ENCODE measurements at regions of chr17 and their contacts with region 1.

Region 1: DNA sequence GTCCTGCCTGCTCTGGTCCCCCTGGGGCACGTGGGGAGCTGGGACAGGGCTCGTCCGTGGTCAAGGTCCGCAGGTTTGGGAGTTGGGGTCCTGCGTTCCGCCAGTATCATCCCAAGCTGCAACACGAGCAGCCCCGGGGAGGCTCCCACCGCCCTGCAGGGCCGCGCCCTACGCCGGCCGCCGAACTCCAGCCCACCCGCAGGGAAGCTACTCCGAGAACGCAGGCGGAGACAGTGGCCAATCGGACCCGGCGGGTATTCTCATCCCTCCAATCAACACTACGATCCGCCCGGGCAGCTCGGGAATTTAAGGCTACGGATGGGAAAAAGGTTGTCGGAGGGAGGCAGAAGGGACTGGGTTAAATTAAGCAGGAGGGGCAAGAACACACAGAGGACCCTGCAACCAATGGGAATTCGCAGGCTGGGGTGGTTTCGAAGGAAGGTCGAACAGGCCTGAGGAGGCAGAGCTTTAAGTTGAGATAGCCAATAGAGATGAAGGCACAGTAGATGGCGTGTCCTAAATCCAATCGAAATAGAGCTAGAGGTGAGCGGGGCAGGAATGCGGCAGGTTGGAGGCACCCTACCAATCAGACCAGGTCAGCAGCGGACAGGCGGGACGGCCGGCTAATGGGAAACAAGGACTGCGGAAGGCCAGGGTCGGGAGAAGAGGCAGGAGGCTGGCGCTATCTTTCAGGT is 626 bp downstream of the SPAG7 start:
- DNase-seq: peak; percentile 98
- H3K4me3 Mint-ChIP-seq: no peak overlapping the region
- H3K27ac Mint-ChIP-seq: peak overlapping the region; percentile 82
- H3K4me1 Mint-ChIP-seq: peaks cover 12% of the 10 kb centered on the region
- H3K27me3 Mint-ChIP-seq: no peaks in the 10 kb centered on the region

Region 2: DNA sequence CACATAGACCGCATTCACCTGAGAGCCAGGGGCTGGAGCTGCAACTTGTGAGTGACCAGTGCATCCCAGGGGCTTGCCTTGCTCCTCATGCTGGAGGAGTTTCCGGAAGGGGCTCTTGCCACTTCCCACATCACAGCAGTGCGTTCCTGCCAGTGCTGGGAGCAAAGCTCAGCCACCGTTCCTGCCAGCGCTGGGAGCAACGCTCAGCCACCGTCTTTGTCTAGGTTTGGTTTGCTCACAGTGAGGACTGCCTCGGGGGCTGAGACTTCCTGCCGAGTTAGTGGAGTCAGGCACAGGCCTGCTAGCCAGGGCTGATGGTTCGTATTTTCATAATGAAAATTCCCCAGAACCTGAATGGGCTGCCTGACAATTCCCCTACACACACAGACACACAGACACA is 58.7 kb before region 1 on chr17:
- intact Hi-C with region 1: loop called (anchors 1 kb)
- DNase-seq: peak; percentile 69
- H3K4me3 Mint-ChIP-seq: no peak overlapping the region
- H3K27ac Mint-ChIP-seq: no peak overlapping the region
- H3K4me1 Mint-ChIP-seq: peaks cover 10% of the 10 kb centered on the region
- H3K27me3 Mint-ChIP-seq: peaks cover 8% of the 10 kb centered on the region

Region 3: DNA sequence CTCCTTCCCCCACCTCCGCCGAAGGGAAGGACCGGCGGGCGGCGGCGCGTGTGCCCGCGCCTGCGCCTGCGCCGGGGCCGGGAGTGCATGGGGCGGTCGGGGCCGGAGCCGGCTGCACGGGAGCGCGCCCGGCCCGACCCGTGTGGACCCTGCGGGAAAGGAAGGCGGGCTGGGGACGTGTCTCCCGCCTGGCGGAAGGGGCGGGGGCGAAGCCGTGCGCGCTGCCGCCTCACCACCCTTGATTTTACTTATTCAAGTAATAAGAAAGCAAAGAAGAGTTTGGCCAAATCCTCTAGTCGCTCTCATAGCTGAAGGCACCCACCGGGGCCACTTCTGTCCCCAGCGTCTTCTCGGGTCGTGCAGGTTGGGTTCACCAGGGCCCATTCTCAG is 18.1 kb before region 1 on chr17:
- intact Hi-C with region 1: loop called (anchors 1 kb)
- DNase-seq: peak; percentile 94
- H3K4me3 Mint-ChIP-seq: peak overlapping the region; percentile 95
- H3K27ac Mint-ChIP-seq: peak overlapping the region; percentile 99
- H3K4me1 Mint-ChIP-seq: peaks cover 44% of the 10 kb centered on the region
- H3K27me3 Mint-ChIP-seq: no peaks in the 10 kb centered on the region

Region 4: DNA sequence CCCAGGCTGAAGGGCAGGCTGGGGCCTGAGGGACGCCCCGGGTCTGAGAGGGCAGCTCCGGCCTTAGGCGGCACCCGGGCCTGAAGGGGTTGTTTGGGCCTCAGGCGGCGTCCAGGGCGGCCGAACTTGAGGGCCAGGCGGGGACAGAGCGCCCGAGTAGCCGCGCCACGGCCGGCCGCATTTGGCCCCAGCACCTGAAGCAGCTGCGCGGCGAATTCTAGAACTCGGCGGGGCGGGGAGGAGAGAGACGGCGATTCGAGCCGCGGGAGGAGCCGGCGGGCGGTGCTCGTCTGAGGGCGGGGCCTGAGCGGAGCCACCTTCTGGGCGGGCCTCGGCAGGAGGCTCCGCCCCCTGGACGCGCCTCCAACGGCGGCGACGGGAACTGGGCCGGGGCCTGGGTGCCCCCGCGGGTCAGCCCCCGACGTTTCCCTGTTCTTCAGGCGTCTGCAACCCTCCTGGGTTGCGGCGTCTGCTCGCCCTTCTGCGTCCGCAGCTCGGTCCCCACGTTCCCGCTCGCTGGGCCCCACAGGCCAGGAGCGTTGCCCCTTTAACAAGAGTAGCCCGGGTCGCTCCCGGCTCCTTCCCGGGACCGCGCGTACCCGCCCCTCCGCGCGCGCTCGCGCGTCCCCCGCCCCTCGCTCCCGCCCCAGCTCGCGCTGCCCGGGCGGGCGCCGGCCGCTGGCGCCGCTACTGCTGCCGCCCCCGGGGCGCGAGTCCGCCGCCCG is 30.5 kb after region 1 on chr17 and contains the starts of genes INCA1 and KIF1C:
- intact Hi-C with region 1: loop called (anchors 1 kb)
- DNase-seq: peak; percentile 98
- H3K4me3 Mint-ChIP-seq: peak within 1 kb of the TSS; percentile 89
- H3K27ac Mint-ChIP-seq: peak within 1 kb of the TSS; percentile 82
- H3K4me1 Mint-ChIP-seq: peaks cover 23% of the 10 kb centered on the region
- H3K27me3 Mint-ChIP-seq: peaks cover 6% of the 10 kb centered on the region
- total RNA-seq, gene INCA1: 0.56 and 0.69 TPM in 2 replicates
- total RNA-seq, gene KIF1C: 62.3 TPM in 2 replicates

Measured in activated CD4-positive, alpha-beta T cell treated with anti-CD3 and anti-CD28 coated beads, Interleukin-2, amount 10 ng/mL, durations not matched to agents 24 days and 14 days (primary cell).